Left cardiac atrium (tissue), 4 donors: ENCODE measurements at regions of chr6 and their contacts with region 1.

Region 1: GRCh38 chr6:131492932-131493573 is 80.0 kb upstream of the ARG1 start:
- DNase-seq: no peak
- ATAC-seq: no peak

Region 2: DNA sequence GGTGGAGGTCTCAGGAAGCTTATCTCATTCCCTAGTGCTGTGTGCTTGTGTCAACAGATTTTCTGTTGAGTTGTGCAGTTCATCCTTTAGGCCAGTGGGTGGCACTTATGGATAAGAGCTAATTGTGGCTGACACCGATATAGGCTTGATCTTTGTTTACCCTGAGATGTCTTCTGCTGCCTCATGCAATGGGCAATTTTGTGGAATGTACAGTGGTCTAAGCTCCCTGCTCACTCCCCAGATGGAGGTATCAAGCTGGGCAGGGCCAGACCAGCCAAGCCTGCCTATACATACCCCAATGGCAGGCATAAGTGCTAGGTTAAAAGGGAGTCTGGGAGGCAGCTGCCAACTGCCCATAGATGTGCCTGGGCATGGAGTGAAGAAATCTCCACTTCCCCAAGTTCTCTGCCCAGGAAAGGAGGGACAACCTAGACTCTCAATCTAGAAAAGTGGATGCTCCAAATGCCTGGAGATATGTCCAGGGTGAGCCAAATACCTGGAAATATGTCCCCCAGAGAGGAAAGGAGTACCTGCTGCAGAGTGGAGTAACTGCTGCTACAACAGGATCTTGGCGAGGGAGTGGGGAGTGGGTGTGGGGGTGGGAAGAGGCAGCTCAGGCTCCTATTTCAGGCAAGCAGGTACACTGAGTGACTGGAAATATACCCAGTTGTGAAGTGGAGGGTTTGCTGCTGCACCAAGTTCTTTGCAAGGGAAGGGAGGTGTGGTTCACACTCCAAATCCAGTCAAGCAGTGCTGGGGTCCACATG is 26.8 kb after region 1 on chr6:
- intact Hi-C with region 1: loop called in 1 of 2 experiments (anchors 1 kb)
- DNase-seq: no peak
- ATAC-seq: peak; percentile 19 to 55